Panc1 (cell line): ENCODE measurements at regions of chr16 and their contacts with region 1.

Region 1: DNA sequence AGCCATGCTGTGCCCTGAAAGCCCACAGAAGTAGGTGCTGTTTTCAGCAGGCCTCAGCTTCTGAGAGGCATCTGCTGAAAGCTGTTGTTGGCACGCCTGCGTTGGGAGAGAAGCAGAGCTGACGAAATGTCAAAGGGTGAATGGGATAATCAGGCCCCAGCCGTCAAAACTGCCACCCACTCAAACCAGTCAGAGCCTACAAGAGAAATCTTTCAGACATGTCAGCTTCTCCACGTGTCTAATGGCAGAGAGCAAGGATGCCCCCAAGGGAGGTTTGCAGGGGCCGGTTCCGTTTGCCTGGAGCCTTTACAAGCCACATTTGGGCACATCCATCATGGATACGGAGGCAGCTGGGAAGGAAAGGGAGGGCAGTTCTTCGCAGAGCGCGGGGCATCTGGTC is 568.2 kb upstream of the EEF2KMT start:
- DNase-seq: no peak
- ATAC-seq: no peak
- H3K4me3 ChIP-seq: no peak overlapping the region
- H3K27ac ChIP-seq: no peak overlapping the region
- H3K4me1 ChIP-seq: no peaks in the 10 kb centered on the region
- H3K27me3 ChIP-seq: peaks cover 3% of the 10 kb centered on the region; the same call in 1 of the 2 replicates
- CTCF ChIP-seq: no peak

Region 2: GRCh38 chr16:5349670-5350517 is 315.9 kb before region 1 on chr16:
- CTCF ChIA-PET with region 1: no interaction called
- POLR2A ChIA-PET with region 1: no interaction called
- in situ Hi-C with region 1: no loop called
- intact Hi-C with region 1: no loop called
- DNase-seq: no peak
- ATAC-seq: no peak
- H3K4me3 ChIP-seq: no peak overlapping the region
- H3K27ac ChIP-seq: no peak overlapping the region
- H3K4me1 ChIP-seq: no peaks in the 10 kb centered on the region
- H3K27me3 ChIP-seq: peaks cover under 1% of the 10 kb centered on the region; the same call in 1 of the 2 replicates
- CTCF ChIP-seq: no peak

Region 3: GRCh38 chr16:5642436-5642835 is 23.4 kb before region 1 on chr16:
- CTCF ChIA-PET with region 1: no interaction called
- POLR2A ChIA-PET with region 1: no interaction called
- in situ Hi-C with region 1: no loop called
- intact Hi-C with region 1: no loop called
- DNase-seq: no peak
- ATAC-seq: no peak
- H3K4me3 ChIP-seq: no peak overlapping the region
- H3K27ac ChIP-seq: no peak overlapping the region
- H3K4me1 ChIP-seq: no peaks in the 10 kb centered on the region
- H3K27me3 ChIP-seq: peaks cover 3% of the 10 kb centered on the region; the same call in 1 of the 2 replicates
- CTCF ChIP-seq: no peak

Region 4: GRCh38 chr16:5693426-5693825 is 27.6 kb after region 1 on chr16:
- CTCF ChIA-PET with region 1: interaction called, 14 read pairs
- POLR2A ChIA-PET with region 1: no interaction called
- in situ Hi-C with region 1: no loop called
- intact Hi-C with region 1: no loop called
- DNase-seq: no peak
- ATAC-seq: no peak
- H3K4me3 ChIP-seq: no peak overlapping the region
- H3K27ac ChIP-seq: no peak overlapping the region
- H3K4me1 ChIP-seq: no peaks in the 10 kb centered on the region
- H3K27me3 ChIP-seq: no peaks in the 10 kb centered on the region
- CTCF ChIP-seq: no peak

Region 5: DNA sequence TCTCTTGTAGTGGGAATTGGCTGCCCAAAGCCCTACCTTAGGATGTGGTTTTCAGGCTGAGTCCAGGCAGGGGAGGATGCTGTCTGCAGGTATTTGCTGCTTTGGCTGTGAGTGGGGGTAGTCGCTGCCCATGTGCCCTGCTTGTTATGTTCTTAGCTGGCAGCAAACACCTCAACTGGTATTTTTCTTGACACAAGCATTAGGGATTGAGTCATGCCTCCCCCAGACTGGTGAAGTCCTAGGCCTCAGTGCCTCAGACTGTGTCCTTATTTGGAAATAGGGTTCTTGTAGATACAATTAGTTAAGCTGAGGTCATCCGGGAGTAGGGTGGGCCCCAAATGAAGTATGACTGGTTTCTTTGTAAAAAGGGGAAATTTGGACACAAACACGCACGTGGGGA is 240.1 kb after region 1 on chr16:
- CTCF ChIA-PET with region 1: no interaction called
- POLR2A ChIA-PET with region 1: no interaction called
- in situ Hi-C with region 1: no loop called
- intact Hi-C with region 1: no loop called
- DNase-seq: no peak
- ATAC-seq: no peak
- H3K4me3 ChIP-seq: no peak overlapping the region
- H3K27ac ChIP-seq: no peak overlapping the region
- H3K4me1 ChIP-seq: no peaks in the 10 kb centered on the region
- H3K27me3 ChIP-seq: no peaks in the 10 kb centered on the region
- CTCF ChIP-seq: no peak

Region 6: GRCh38 chr16:6643080-6643686 is 977.3 kb after region 1 on chr16:
- CTCF ChIA-PET with region 1: no interaction called
- POLR2A ChIA-PET with region 1: no interaction called
- in situ Hi-C with region 1: no loop called
- intact Hi-C with region 1: loop called (anchors 10 kb)
- DNase-seq: peak; percentile 54
- ATAC-seq: no peak
- H3K4me3 ChIP-seq: no peak overlapping the region
- H3K27ac ChIP-seq: no peak overlapping the region
- H3K4me1 ChIP-seq: no peaks in the 10 kb centered on the region
- H3K27me3 ChIP-seq: peaks cover 26% of the 10 kb centered on the region
- CTCF ChIP-seq: peak; percentile 80; the same call in 1 of the 2 replicates